ENCODE measurements at regions of chr15 and their contacts with region 1.

Region 1: GRCh38 chr15:82197733-82198594 is 64.6 kb downstream of the EFL1 start:
- DNase-seq: peak; percentile 83
- H3K4me3 ChIP-seq: no peak overlapping the region
- H3K27ac ChIP-seq: no peak overlapping the region
- H3K4me1 ChIP-seq: peaks cover 4% of the 10 kb centered on the region
- H3K27me3 ChIP-seq: no peaks in the 10 kb centered on the region

Region 2: DNA sequence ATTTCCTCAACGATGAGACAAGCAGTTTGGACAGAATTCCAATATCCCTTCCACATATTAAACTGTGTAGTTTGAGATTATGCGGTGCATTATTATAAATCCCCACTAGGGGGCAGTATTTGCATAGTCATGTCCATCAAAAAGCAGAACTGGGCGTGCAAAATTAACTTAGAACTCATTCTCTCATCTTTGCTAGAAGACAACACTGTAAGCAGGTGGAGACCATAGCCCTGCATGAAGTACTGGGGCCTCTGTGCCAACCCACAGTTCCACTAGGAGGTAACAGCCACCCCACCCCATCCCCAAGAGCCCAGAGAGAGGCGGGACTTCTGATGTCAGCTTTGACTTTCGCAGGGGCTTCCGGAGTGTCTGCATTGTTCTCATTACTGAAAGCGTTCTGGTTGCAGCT is 717.3 kb before region 1 on chr15:
- in situ Hi-C with region 1: loop called (anchors 25 kb)
- DNase-seq: peak; percentile 68
- H3K4me3 ChIP-seq: no peak overlapping the region
- H3K27ac ChIP-seq: no peak overlapping the region
- H3K4me1 ChIP-seq: no peaks in the 10 kb centered on the region
- H3K27me3 ChIP-seq: 0 out of 2 replicates have a peak, but pooled peaks cover 4% of the 10 kb centered on the region

Measured in GM23248 (cell line).